ENCODE measurements at regions of chr3 and their contacts with region 1.

Region 1: DNA sequence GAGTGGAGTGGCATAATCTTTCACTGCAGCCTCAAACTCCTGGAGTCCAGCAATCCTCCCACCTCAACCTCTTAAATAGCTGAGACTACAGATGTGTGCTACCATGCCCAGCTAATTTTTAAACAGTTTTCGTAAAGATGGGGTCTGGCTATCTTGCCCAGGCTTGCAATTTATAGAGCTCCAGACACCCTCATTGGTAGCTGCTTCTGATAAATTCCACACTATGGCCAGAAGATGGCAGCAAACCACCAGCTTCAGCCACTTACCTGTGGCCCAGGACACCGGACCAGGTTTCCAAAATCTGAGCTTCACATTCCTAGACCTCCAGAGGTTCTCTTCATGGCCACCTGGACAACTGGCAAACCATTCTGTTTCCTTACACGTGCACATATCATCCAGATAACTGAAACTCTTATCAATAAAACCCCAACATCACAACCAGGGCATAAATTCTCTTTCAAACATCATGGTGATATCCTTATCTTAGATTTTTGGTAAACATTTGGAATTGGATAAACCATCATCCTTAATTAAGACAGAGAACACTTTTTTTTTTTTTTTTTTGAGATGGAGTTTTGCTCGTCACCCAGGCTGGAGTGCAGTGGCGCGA is 28.9 kb downstream of the FBXW12 start:
- DNase-seq: no peak
- ATAC-seq: peak; percentile 65 to 78
- H3K4me3 ChIP-seq: no peak overlapping the region
- H3K27ac ChIP-seq: peak overlapping the region; percentile 73
- H3K4me1 ChIP-seq: peaks cover 8% of the 10 kb centered on the region
- H3K27me3 ChIP-seq: no peaks in the 10 kb centered on the region
- CTCF ChIP-seq: peak; percentile 86

Region 2: DNA sequence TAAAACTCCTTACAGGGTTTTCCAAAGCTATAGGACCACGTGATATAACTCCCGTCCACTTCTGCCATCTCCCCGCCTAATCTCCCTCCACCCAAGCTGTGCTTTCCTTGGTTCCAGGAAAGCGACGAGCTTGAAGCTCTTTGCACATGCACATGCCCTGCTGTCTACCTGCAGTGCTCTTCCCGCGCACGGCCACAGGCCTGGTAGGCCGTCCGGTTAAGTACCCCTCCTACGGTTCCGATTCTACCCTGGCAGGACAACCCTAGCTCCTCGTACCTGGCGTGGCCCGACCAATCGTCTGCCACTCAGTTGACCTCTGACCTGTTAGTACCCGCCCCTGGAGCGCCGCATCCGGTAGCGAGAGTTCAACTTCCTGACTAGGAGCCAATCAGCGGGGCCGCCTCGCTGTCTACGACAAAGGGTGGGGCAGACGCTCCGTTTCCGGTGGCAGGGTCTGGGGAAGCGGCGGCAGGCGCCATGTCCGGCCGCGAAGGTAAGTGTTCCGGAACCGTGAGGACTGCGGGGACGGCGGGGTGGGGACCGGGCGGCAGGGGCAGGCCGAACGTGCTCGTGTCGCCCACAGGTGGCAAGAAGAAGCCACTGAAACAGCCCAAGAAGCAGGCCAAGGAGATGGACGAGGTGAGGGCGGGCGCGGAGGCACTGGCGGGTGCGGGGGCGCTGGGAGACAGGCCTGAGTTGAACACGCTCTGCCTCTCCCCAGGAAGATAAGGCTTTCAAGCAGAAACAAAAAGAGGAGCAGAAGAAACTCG is 39.1 kb after region 1 on chr3 and contains the starts of genes CCDC51 and TMA7:
- intact Hi-C with region 1: loop called (anchors 5 kb)
- DNase-seq: peak; percentile 99
- ATAC-seq: peak; percentile 98
- H3K4me3 ChIP-seq: peak within 1 kb of the TSS; percentile 87
- H3K27ac ChIP-seq: peak within 1 kb of the TSS; percentile 98
- H3K4me1 ChIP-seq: peaks cover 31% of the 10 kb centered on the region
- H3K27me3 ChIP-seq: no peaks in the 10 kb centered on the region
- CTCF ChIP-seq: no peak
- total RNA-seq, gene CCDC51: 8.6 TPM
- total RNA-seq, gene TMA7: 153 TPM

Region 3: GRCh38 chr3:48518638-48519276 is 117.8 kb after region 1 on chr3:
- intact Hi-C with region 1: no loop called
- DNase-seq: no peak
- ATAC-seq: peak in 1 of 2 donors; percentile 31
- H3K4me3 ChIP-seq: no peak overlapping the region
- H3K27ac ChIP-seq: no peak overlapping the region
- H3K4me1 ChIP-seq: no peaks in the 10 kb centered on the region
- H3K27me3 ChIP-seq: no peaks in the 10 kb centered on the region
- CTCF ChIP-seq: no peak

Measured in lower lobe of right lung (tissue), 2 donors.